Transverse colon (tissue), 4 donors: ENCODE measurements at regions of chr5 and their contacts with region 1.

Region 1: GRCh38 chr5:35926389-35927051 is 11.9 kb downstream of the CAPSL start:
- DNase-seq: peak; percentile 26
- H3K4me3 ChIP-seq: no peak overlapping the region
- H3K27ac ChIP-seq: no peak overlapping the region
- H3K4me1 ChIP-seq: peaks cover 0 to 9% (median 4%) of the 10 kb centered on the region in 4 donors
- H3K27me3 ChIP-seq: peaks cover 19% of the 10 kb centered on the region
- CTCF ChIP-seq: peak; percentile 74 to 87 (median 81)
- EP300 ChIP-seq: no peak
- POLR2A ChIP-seq: no peak

Region 2: DNA sequence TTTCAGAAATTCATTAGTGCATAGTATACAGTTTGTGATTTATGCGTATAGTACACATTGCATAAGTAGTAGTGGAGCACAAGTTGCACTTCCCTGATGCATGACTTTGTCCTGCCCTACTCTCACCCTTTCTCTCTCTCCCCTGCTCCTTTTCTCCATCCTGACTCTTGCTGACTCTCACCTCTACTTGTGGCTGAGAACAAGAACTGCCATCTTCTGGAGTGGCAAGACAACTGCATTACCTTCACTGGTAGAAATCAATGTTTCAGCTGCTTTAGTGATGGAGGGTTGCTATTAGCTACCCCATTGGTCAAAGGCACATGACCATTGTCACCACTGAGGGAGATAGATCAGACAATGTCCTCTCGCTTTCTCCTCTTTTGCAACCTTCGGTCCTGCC is 282.0 kb before region 1 on chr5:
- in situ Hi-C with region 1: loop called in 1 of 4 experiments (anchors 25 kb)
- intact Hi-C with region 1: no loop called
- DNase-seq: no peak
- H3K4me3 ChIP-seq: no peak overlapping the region
- H3K27ac ChIP-seq: no peak overlapping the region
- H3K4me1 ChIP-seq: no peaks in the 10 kb centered on the region
- H3K27me3 ChIP-seq: no peaks in the 10 kb centered on the region
- CTCF ChIP-seq: no peak
- EP300 ChIP-seq: no peak
- POLR2A ChIP-seq: no peak

Region 3: GRCh38 chr5:35651002-35651756 is 275.3 kb before region 1 on chr5:
- in situ Hi-C with region 1: loop called in 2 of 4 experiments (anchors 25 kb)
- intact Hi-C with region 1: no loop called
- DNase-seq: peak; percentile 24
- H3K4me3 ChIP-seq: no peak overlapping the region
- H3K27ac ChIP-seq: no peak overlapping the region
- H3K4me1 ChIP-seq: no peaks in the 10 kb centered on the region
- H3K27me3 ChIP-seq: no peaks in the 10 kb centered on the region
- CTCF ChIP-seq: peak in 4 of 5 experiments; percentile 21 to 41 (median 29)
- EP300 ChIP-seq: no peak
- POLR2A ChIP-seq: no peak

Region 4: GRCh38 chr5:35777358-35778087 is 149.0 kb before region 1 on chr5:
- in situ Hi-C with region 1: loop called in 2 of 4 experiments (anchors 10 kb)
- intact Hi-C with region 1: loop called (anchors 10 kb)
- DNase-seq: peak; percentile 69
- H3K4me3 ChIP-seq: no peak overlapping the region
- H3K27ac ChIP-seq: no peak overlapping the region
- H3K4me1 ChIP-seq: no peaks in the 10 kb centered on the region
- H3K27me3 ChIP-seq: no peaks in the 10 kb centered on the region
- CTCF ChIP-seq: peak; percentile 46 to 66 (median 52)
- EP300 ChIP-seq: no peak
- POLR2A ChIP-seq: no peak